ENCODE measurements at regions of chr7 and their contacts with region 1.

Region 1: GRCh38 chr7:116211006-116211912 is 920 bp downstream of the TES start:
- DNase-seq: peak; percentile 87
- H3K4me3 Mint-ChIP-seq: peak overlapping the region; percentile 87
- H3K27ac Mint-ChIP-seq: peak overlapping the region; percentile 97
- H3K4me1 Mint-ChIP-seq: peaks cover 42% of the 10 kb centered on the region
- H3K27me3 Mint-ChIP-seq: no peaks in the 10 kb centered on the region

Region 2: GRCh38 chr7:114789871-114790311 is 1421.4 kb before region 1 on chr7:
- CTCF ChIA-PET with region 1: no interaction called
- intact Hi-C with region 1: loop called (anchors 10 kb)
- DNase-seq: no peak
- H3K4me3 Mint-ChIP-seq: no peak overlapping the region
- H3K27ac Mint-ChIP-seq: peak overlapping the region; percentile 37
- H3K4me1 Mint-ChIP-seq: peaks cover 62% of the 10 kb centered on the region
- H3K27me3 Mint-ChIP-seq: peaks cover 13% of the 10 kb centered on the region

Region 3: GRCh38 chr7:114922016-114922651 is 1289.1 kb before region 1 on chr7 and contains the start of gene MDFIC:
- CTCF ChIA-PET with region 1: no interaction called
- intact Hi-C with region 1: loop called (anchors 5 kb)
- DNase-seq: peak; percentile 76
- H3K4me3 Mint-ChIP-seq: peak within 1 kb of the TSS; percentile 98
- H3K27ac Mint-ChIP-seq: peak within 1 kb of the TSS; percentile 99
- H3K4me1 Mint-ChIP-seq: peaks cover 63% of the 10 kb centered on the region
- H3K27me3 Mint-ChIP-seq: no peaks in the 10 kb centered on the region
- total RNA-seq, gene MDFIC: 79.4 to 93.1 TPM

Region 4: GRCh38 chr7:116224492-116225098 is 13.3 kb after region 1 on chr7:
- CTCF ChIA-PET with region 1: interaction called, 5 read pairs
- intact Hi-C with region 1: loop called (anchors 1 kb)
- DNase-seq: no peak
- H3K4me3 Mint-ChIP-seq: peak overlapping the region; percentile 41
- H3K27ac Mint-ChIP-seq: peak overlapping the region; percentile 58
- H3K4me1 Mint-ChIP-seq: peaks cover 81% of the 10 kb centered on the region
- H3K27me3 Mint-ChIP-seq: no peaks in the 10 kb centered on the region

Region 5: DNA sequence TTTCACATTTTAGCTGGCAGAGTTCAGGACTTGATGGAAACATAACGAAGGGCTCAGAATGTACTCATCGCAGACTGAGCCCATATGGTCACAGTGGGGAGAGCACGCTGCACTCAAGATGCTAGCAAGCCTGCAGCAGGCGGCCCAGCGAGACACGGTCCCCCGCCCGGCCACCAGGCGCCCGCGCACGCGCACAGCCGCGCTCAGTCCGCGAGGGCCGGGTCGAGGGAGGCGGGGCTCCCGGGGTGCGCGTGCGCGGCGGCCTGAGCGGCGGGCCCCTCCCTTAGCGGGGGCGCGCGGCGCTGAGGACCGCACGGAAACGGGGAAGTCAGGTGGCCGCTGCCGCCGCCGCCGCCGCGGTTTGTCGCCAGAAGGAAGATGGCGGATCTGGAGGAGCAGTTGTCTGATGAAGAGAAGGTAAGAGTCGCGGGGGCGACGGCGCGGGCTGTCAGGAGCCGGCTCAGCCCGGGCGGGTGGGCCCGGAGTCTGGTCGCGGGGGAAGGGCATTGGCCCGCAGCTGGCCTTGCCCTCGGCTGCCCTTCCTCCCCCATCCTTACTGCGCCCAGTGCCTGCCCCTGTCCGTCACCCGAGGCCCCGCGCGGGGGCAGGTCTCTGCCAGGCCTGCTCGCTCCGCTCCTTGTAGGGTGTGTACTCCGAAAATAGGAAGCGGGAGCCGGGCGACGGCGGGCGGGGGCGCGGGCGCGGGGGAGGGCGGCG is 651.1 kb after region 1 on chr7 and contains the start of gene CAPZA2:
- CTCF ChIA-PET with region 1: no interaction called
- intact Hi-C with region 1: loop called (anchors 1 kb)
- DNase-seq: peak; percentile 93
- H3K4me3 Mint-ChIP-seq: peak within 1 kb of the TSS; percentile 93
- H3K27ac Mint-ChIP-seq: peak within 1 kb of the TSS; percentile 93
- H3K4me1 Mint-ChIP-seq: peaks cover 36% of the 10 kb centered on the region
- H3K27me3 Mint-ChIP-seq: peaks cover 7% of the 10 kb centered on the region
- total RNA-seq, gene CAPZA2: 127 to 164 TPM

Region 6: GRCh38 chr7:117014673-117015133 is 803.4 kb after region 1 on chr7:
- CTCF ChIA-PET with region 1: no interaction called
- intact Hi-C with region 1: loop called (anchors 5 kb)
- DNase-seq: peak; percentile 28
- H3K4me3 Mint-ChIP-seq: no peak overlapping the region
- H3K27ac Mint-ChIP-seq: no peak overlapping the region
- H3K4me1 Mint-ChIP-seq: peaks cover 40% of the 10 kb centered on the region
- H3K27me3 Mint-ChIP-seq: peaks cover 3% of the 10 kb centered on the region

Measured in activated naive CD4-positive, alpha-beta T cell treated with anti-CD3 and anti-CD28 coated beads for 36 hours (primary cell).